ENCODE measurements at regions of chr22 and their contacts with region 1.

Region 1: DNA sequence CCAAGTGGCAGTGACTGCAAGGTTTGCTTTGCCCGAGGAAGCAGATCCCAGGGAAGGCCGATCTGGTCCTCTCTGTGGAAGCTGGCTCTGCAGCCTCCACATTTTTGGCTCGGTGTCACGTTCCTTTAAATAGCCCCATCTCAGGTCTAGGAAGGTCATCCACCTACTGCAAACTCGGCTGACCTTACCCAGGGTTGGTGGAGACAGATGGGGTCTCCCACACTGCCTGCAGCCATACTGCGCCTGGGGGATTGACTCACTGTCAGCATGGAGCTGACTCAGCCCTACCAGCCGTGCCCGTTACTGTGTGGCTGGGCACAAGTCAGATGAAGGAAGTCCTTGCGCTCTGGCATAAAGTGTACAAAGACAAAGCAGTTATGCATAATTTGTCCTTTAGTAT is 16.9 kb downstream of the CDPF1 start:
- DNase-seq: no peak

Region 2: GRCh38 chr22:46219636-46220035 is 13.6 kb before region 1 on chr22:
- CTCF ChIA-PET with region 1: no interaction called
- POLR2A ChIA-PET with region 1: no interaction called
- DNase-seq: no peak

Region 3: DNA sequence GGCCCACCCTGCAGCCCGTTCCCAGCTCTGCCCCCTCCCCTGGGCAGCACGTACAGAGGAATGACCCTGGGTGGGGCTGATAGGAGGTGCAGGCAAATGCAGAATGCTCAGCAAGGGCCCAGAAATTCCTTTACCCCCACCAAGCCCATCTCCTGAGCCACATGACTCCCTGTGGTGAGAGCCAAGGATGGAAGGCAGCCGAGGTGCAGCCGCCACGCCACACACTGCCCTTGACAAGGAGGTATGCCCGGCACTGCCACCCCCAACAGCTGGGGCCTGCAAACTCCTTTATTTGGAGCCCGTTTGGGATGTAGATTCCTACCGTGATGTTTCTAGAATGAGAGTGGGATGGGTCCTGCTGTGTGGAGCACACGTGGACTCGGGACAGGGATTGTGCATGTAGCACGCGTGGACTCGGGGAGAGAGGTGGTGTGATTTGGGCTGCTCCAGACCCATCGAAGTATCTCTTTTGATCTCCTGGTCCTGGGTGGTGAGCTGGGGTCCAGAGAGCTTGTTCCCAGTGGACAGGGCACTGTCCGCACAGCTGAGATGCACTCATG is 76.4 kb after region 1 on chr22:
- CTCF ChIA-PET with region 1: interaction called, 10 read pairs
- POLR2A ChIA-PET with region 1: no interaction called
- DNase-seq: no peak

Region 4: GRCh38 chr22:46399251-46399999 is 166.2 kb after region 1 on chr22:
- CTCF ChIA-PET with region 1: no interaction called
- POLR2A ChIA-PET with region 1: no interaction called
- DNase-seq: no peak

Measured in HEK293T (cell line).